Activated CD8-positive, alpha-beta T cell treated with anti-CD3 and anti-CD28 coated beads for 36 hours (primary cell): ENCODE measurements at regions of chr19 and their contacts with region 1.

Region 1: GRCh38 chr19:3429581-3430080 is 50.7 kb downstream of the SMIM24 start:
- DNase-seq: peak; percentile 83
- ATAC-seq: peak; percentile 91
- H3K4me3 Mint-ChIP-seq: no peak overlapping the region
- H3K27ac Mint-ChIP-seq: no peak overlapping the region
- H3K4me1 Mint-ChIP-seq: peaks cover 9% of the 10 kb centered on the region
- H3K27me3 Mint-ChIP-seq: no peaks in the 10 kb centered on the region
- CTCF ChIP-seq: peak; percentile 98

Region 2: GRCh38 chr19:3324321-3324856 is 105.2 kb before region 1 on chr19:
- CTCF ChIA-PET with region 1: interaction called, 19 read pairs
- POLR2A ChIA-PET with region 1: no interaction called
- intact Hi-C with region 1: loop called (anchors 5 kb)
- DNase-seq: peak; percentile 88
- ATAC-seq: peak; percentile 79
- H3K4me3 Mint-ChIP-seq: no peak overlapping the region
- H3K27ac Mint-ChIP-seq: no peak overlapping the region
- H3K4me1 Mint-ChIP-seq: no peaks in the 10 kb centered on the region
- H3K27me3 Mint-ChIP-seq: peaks cover 10% of the 10 kb centered on the region
- CTCF ChIP-seq: peak; percentile 86

Region 3: DNA sequence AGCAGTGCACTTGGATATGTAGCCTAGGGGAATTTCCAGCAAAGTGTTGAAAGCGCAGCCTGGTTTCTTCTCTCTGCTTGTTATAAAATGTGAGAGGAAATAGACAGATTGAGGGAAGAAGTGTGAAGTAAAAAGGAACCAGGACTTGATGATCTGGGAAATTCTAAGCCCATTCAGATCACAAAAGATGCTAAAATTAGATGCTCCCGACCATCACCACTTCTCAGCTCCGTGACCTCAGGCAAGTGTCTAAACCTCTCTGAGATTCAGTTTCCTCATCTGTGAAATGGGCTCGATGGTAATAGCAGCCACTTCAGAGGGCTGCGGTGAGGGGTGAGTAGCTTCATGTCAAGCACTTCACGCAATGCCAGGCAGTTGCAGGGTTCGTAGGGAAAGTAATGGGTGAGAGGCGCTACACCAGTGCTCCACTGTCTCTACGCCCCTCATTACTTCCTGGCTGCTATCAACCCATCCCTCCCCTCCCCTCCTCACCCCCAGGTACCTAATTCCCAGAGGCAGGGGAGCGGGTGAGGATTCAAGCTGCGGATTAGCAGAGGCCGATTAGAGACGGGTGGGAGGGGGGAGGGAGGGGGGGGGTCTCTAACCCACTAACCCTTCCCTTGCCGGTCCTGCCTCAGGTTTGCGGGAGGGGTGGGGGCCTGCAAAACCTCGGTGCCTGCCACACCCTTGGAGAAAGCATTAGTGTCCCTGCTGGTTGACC is 72.2 kb before region 1 on chr19:
- CTCF ChIA-PET with region 1: interaction called, 10 read pairs
- POLR2A ChIA-PET with region 1: interaction called, 3 read pairs
- intact Hi-C with region 1: no loop called
- DNase-seq: peak; percentile 63
- ATAC-seq: peak; percentile 7
- H3K4me3 Mint-ChIP-seq: peak overlapping the region; percentile 59
- H3K27ac Mint-ChIP-seq: peak overlapping the region; percentile 36
- H3K4me1 Mint-ChIP-seq: peaks cover 26% of the 10 kb centered on the region
- H3K27me3 Mint-ChIP-seq: peaks cover 1% of the 10 kb centered on the region
- CTCF ChIP-seq: no peak

Region 4: DNA sequence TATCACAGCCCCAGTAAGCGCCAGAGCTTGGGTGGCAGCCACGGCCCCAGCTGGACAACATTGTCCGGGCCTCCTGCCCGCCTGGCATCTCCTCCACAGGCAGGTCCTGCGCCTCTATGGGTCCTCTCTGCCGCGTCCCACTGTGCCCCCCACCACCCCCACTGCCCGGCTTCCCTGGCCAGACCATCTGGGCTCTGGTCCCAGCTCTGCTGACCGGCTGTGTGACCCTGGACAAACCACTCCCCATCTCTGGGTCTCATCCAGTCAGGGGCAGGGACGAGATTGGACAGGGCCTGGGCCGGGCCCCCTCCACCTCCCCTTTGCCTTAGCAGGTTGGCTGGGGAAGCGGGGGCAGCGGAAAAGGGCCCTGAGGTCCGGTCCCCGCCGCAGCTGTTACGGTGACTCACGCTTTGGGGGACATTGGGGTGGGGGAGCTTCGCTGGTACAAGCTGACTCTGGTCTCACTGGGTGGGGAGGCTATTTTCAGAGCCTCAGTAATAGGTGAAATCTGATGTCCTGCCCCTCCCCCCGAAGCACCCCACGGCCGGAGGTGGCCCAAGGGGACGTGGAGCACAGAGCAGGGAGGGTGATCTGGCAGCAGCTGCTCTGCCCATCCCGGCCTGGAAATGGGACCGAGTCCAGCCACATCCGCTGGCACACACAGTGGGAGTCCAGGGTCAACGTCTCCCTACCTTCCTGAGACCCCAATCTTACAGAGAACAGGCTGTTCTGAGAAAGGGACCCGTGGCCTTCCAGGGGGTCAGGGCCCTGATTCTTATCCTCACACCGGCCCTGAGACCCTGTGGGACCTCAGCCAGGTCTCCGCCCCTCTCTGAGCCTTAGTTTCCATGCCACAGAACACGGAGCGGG is 54.2 kb before region 1 on chr19:
- CTCF ChIA-PET with region 1: interaction called, 17 read pairs
- POLR2A ChIA-PET with region 1: interaction called, 4 read pairs
- intact Hi-C with region 1: no loop called
- DNase-seq: no peak
- ATAC-seq: no peak
- H3K4me3 Mint-ChIP-seq: no peak overlapping the region
- H3K27ac Mint-ChIP-seq: no peak overlapping the region
- H3K4me1 Mint-ChIP-seq: peaks cover 12% of the 10 kb centered on the region
- H3K27me3 Mint-ChIP-seq: no peaks in the 10 kb centered on the region
- CTCF ChIP-seq: no peak

Region 5: GRCh38 chr19:3407556-3408516 is 21.8 kb before region 1 on chr19:
- CTCF ChIA-PET with region 1: interaction called, 14 read pairs
- POLR2A ChIA-PET with region 1: no interaction called
- intact Hi-C with region 1: no loop called
- DNase-seq: no peak
- ATAC-seq: no peak
- H3K4me3 Mint-ChIP-seq: no peak overlapping the region
- H3K27ac Mint-ChIP-seq: no peak overlapping the region
- H3K4me1 Mint-ChIP-seq: no peaks in the 10 kb centered on the region
- H3K27me3 Mint-ChIP-seq: no peaks in the 10 kb centered on the region
- CTCF ChIP-seq: no peak

Region 6: GRCh38 chr19:3440082-3440481 is 10.5 kb after region 1 on chr19:
- CTCF ChIA-PET with region 1: interaction called, 16 read pairs
- POLR2A ChIA-PET with region 1: no interaction called
- intact Hi-C with region 1: no loop called
- DNase-seq: peak; percentile 76
- ATAC-seq: peak; percentile 63
- H3K4me3 Mint-ChIP-seq: no peak overlapping the region
- H3K27ac Mint-ChIP-seq: no peak overlapping the region
- H3K4me1 Mint-ChIP-seq: peaks cover 9% of the 10 kb centered on the region
- H3K27me3 Mint-ChIP-seq: no peaks in the 10 kb centered on the region
- CTCF ChIP-seq: peak; percentile 65

Region 7: DNA sequence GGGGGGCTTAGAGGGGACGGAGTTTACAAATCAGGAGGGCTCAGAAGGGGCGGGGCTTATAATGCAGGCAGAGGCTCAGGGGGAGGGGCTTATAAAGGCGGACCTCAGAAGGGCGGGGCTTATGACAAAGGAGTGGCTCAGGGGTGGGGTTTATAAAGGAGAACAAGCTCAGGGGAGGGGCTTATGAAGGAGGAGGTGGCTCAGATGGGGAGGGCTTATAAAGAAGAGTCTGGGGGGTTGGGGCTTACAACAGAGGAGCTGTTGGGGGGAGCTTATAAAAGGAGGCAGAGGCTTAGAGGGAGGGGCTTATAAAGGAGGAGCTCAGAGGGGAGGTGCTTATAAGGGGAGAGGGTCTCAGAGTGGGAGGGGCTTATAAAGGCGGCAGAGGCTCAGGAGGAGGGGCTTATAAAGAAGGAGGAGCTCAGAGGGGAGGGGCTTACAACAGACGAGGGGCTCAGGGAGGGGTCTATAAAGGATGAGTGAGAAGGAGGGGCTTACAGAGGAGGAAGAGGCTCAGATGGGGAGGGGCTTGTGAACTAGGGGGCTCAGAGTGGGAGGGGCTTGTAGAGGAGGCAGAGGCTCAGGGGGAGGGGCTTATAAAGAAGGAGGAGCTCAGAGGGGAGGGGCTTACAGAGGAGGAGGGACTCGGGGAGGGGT is 49.7 kb after region 1 on chr19:
- CTCF ChIA-PET with region 1: interaction called, 16 read pairs
- POLR2A ChIA-PET with region 1: no interaction called
- intact Hi-C with region 1: no loop called
- DNase-seq: peak; percentile 84
- ATAC-seq: peak; percentile 87
- H3K4me3 Mint-ChIP-seq: no peak overlapping the region
- H3K27ac Mint-ChIP-seq: no peak overlapping the region
- H3K4me1 Mint-ChIP-seq: peaks cover 16% of the 10 kb centered on the region
- H3K27me3 Mint-ChIP-seq: no peaks in the 10 kb centered on the region
- CTCF ChIP-seq: no peak